HCT116 (cell line): ENCODE measurements at regions of chr4 and their contacts with region 1.

Region 1: GRCh38 chr4:147866532-147867271 is 134.8 kb downstream of the ARHGAP10 start:
- DNase-seq: peak; percentile 81
- ATAC-seq: peak; percentile 96
- H3K4me3 ChIP-seq: no peak overlapping the region
- H3K27ac ChIP-seq: no peak overlapping the region
- H3K4me1 ChIP-seq: no peaks in the 10 kb centered on the region
- H3K27me3 ChIP-seq: no peaks in the 10 kb centered on the region
- CTCF ChIP-seq: peak; percentile 97 to 100 (median 100)
- POLR2A ChIP-seq: no peak
- RAD21 ChIP-seq: peak; percentile 100

Region 2: DNA sequence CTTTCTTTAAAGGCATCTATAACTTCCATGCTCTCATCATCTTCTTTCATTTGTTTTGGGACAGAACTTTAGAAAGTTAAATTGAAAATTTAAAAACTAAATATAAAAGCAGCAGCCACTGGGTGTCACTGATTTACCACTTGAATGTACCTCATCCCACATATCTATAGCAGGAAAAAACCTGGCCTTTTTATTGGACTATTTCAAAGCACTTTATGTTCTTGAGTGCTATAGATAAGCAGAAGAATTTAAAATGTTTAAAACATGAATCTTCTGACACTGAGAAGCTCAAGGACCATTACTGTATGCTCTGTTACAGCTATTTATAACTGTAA is 755.7 kb before region 1 on chr4:
- CTCF ChIA-PET with region 1: interaction called, 5 read pairs
- POLR2A ChIA-PET with region 1: no interaction called
- RAD21 ChIA-PET with region 1: no interaction called
- intact Hi-C with region 1: loop called (anchors 5 kb)
- DNase-seq: no peak
- ATAC-seq: peak; percentile 50; the same call in 1 of the 2 replicates
- H3K4me3 ChIP-seq: no peak overlapping the region
- H3K27ac ChIP-seq: no peak overlapping the region
- H3K4me1 ChIP-seq: no peaks in the 10 kb centered on the region
- H3K27me3 ChIP-seq: no peaks in the 10 kb centered on the region
- CTCF ChIP-seq: 0 out of 6 replicates have a peak, but pooled peaks of 1 of the 3 experiments have one; percentile 29
- POLR2A ChIP-seq: no peak
- RAD21 ChIP-seq: peak; percentile 60

Region 3: GRCh38 chr4:147590249-147590920 is 276.3 kb before region 1 on chr4:
- CTCF ChIA-PET with region 1: interaction called, 61 read pairs
- POLR2A ChIA-PET with region 1: no interaction called
- RAD21 ChIA-PET with region 1: no interaction called
- intact Hi-C with region 1: no loop called
- DNase-seq: peak; percentile 54
- ATAC-seq: peak; percentile 83
- H3K4me3 ChIP-seq: no peak overlapping the region
- H3K27ac ChIP-seq: no peak overlapping the region
- H3K4me1 ChIP-seq: no peaks in the 10 kb centered on the region
- H3K27me3 ChIP-seq: no peaks in the 10 kb centered on the region
- CTCF ChIP-seq: peak; percentile 78 to 90 (median 81)
- POLR2A ChIP-seq: no peak
- RAD21 ChIP-seq: peak; percentile 94

Region 4: GRCh38 chr4:147644471-147644870 is 222.2 kb before region 1 on chr4:
- CTCF ChIA-PET with region 1: interaction called, 10 read pairs
- POLR2A ChIA-PET with region 1: no interaction called
- RAD21 ChIA-PET with region 1: interaction called in 1 of 2 experiments, 4 read pairs
- intact Hi-C with region 1: no loop called
- DNase-seq: no peak
- ATAC-seq: no peak
- H3K4me3 ChIP-seq: no peak overlapping the region
- H3K27ac ChIP-seq: no peak overlapping the region
- H3K4me1 ChIP-seq: peaks cover 0 to 5% of the 10 kb centered on the region in 2 experiments; a peak in 1 of 4 replicates
- H3K27me3 ChIP-seq: no peaks in the 10 kb centered on the region
- CTCF ChIP-seq: no peak
- POLR2A ChIP-seq: no peak
- RAD21 ChIP-seq: no peak

Region 5: DNA sequence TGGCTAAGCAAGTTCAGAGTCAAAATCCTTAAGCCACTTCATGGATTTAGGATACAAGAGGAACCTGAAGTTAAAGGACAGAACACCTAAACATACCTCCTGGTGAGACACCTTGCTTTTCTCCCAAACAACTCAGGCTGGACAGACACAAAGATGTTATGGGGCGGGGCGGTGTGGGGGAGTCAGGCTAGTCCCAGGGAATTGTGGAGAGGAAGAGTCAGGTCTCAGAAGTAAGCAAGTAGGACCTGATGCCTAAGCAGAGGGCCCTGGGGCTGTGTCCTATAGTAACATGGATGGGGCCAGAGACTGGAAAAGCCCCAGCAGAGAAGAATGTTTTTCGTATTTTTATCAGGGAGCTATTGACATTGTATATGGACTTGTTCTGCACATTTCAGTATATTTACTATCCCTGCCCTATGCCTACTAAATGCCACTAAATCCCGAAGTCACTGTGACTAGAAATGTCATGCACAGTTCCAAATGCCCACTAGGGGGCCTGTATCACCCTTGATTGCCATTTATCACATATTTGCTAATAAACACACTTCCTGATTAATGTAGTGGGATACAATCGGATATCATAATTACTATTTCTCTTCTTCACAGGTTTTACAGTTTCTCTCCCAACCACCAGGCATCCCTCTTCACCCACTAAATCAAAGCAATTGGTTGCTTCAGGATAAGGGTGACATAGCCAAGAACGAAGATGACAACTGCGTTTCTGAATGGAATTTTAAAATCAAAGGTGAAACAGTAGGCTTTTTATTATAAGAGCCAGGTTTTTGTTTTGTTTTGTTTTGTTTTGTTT is 158.6 kb before region 1 on chr4:
- CTCF ChIA-PET with region 1: interaction called, 29 read pairs
- POLR2A ChIA-PET with region 1: no interaction called
- RAD21 ChIA-PET with region 1: interaction called, 3 to 4 read pairs
- intact Hi-C with region 1: loop called (anchors 1 kb)
- DNase-seq: peak; percentile 66
- ATAC-seq: peak; percentile 90
- H3K4me3 ChIP-seq: peak overlapping the region; percentile 29 to 34
- H3K27ac ChIP-seq: peak overlapping the region; percentile 11; the same call in 1 of the 2 replicates
- H3K4me1 ChIP-seq: peaks cover 0 to 9% of the 10 kb centered on the region in 2 experiments; a peak in 1 of 4 replicates
- H3K27me3 ChIP-seq: no peaks in the 10 kb centered on the region
- CTCF ChIP-seq: peak; percentile 80 to 98 (median 97)
- POLR2A ChIP-seq: no peak
- RAD21 ChIP-seq: peak; percentile 93

Region 6: GRCh38 chr4:147853706-147854105 is 13.0 kb before region 1 on chr4:
- CTCF ChIA-PET with region 1: interaction called, 20 read pairs
- POLR2A ChIA-PET with region 1: no interaction called
- RAD21 ChIA-PET with region 1: no interaction called
- intact Hi-C with region 1: no loop called
- DNase-seq: no peak
- ATAC-seq: no peak
- H3K4me3 ChIP-seq: no peak overlapping the region
- H3K27ac ChIP-seq: no peak overlapping the region
- H3K4me1 ChIP-seq: no peaks in the 10 kb centered on the region
- H3K27me3 ChIP-seq: no peaks in the 10 kb centered on the region
- CTCF ChIP-seq: no peak
- POLR2A ChIP-seq: no peak
- RAD21 ChIP-seq: no peak